CD14-positive monocyte (primary cell): ENCODE measurements at regions of chr4 and their contacts with region 1.

Region 1: GRCh38 chr4:7649741-7650531 is 215.2 kb upstream of the PSAPL1 start:
- DNase-seq: peak; percentile 96 to 97 (median 96)
- H3K4me3 ChIP-seq: peak overlapping the region in 1 of 3 experiments; percentile 54
- H3K4me3 Mint-ChIP-seq: peak overlapping the region; percentile 64 to 72
- H3K27ac ChIP-seq: peak overlapping the region; percentile 84 to 92
- H3K27ac Mint-ChIP-seq: peak overlapping the region; percentile 96 to 100 (median 99)
- H3K4me1 ChIP-seq: peaks cover 96 to 99% of the 10 kb centered on the region in 2 donors
- H3K4me1 Mint-ChIP-seq: peaks cover 96% of the 10 kb centered on the region
- H3K27me3 ChIP-seq: no peaks in the 10 kb centered on the region
- H3K27me3 Mint-ChIP-seq: peaks cover 6 to 42% (median 20%) of the 10 kb centered on the region in 3 donors
- CTCF ChIP-seq: no peak

Region 2: DNA sequence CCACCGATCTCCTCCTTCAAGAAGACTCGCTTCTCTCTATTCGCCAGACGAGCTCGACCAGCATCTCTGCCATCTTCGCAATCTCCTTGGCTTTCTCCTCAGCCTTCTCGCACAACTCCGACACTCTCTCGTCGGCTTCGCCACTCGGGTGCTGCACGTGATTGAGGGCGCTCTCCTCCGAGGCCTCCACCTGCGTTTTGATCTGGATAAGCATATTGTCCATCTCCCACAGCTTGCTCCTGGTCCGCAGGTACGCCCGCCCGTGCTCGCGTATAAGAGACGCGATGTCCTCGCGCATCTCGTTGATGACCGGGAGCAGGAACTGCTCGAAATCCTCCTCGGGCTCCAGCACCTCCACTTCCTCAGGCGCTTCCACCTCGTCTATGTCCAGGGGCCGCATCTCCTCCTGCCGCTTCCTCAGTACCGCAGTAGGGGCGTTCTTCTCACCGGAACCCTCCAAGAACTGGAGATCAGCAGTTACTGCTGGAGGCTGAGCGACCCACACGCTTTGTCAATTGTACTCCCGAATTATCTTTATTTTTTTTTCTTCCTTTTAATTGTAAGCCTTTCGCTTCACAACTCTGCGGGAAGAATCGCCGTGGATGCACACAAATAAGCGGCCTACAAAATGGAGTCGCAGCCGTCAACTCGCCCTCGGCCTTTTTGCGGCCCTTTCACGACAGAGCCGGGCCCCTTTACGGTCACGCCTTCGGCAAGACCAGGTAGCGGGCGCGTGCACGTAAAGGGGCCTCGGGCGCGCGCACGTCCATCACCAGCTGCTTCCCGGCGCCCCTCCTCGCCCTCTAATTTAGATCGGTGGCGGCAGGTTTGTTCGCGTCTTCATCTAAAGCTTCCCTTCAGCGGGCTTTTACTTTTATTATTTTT is 940.5 kb before region 1 on chr4 and contains the start of gene MRFAP1L1:
- intact Hi-C with region 1: loop called in 1 of 2 experiments (anchors 10 kb)
- DNase-seq: peak; percentile 93 to 95 (median 95)
- H3K4me3 ChIP-seq: peak within 1 kb of the TSS; percentile 75 to 85 (median 82)
- H3K4me3 Mint-ChIP-seq: peak within 1 kb of the TSS; percentile 99 to 100
- H3K27ac ChIP-seq: peak within 1 kb of the TSS; percentile 89 to 91
- H3K27ac Mint-ChIP-seq: peak within 1 kb of the TSS; percentile 96 to 99 (median 98)
- H3K4me1 ChIP-seq: peaks cover 36 to 41% of the 10 kb centered on the region in 2 donors
- H3K4me1 Mint-ChIP-seq: peaks cover 48% of the 10 kb centered on the region
- H3K27me3 ChIP-seq: no peaks in the 10 kb centered on the region
- H3K27me3 Mint-ChIP-seq: peaks cover 0 to 4% (median 2%) of the 10 kb centered on the region in 3 donors
- CTCF ChIP-seq: no peak
- polyA plus RNA-seq, gene MRFAP1L1: 7.6 to 19.1 (median 13.8) TPM

Region 3: GRCh38 chr4:7539659-7540058 is 110.3 kb before region 1 on chr4:
- intact Hi-C with region 1: loop called in 1 of 2 experiments (anchors 10 kb)
- DNase-seq: peak; percentile 48 to 71 (median 55)
- H3K4me3 ChIP-seq: peak overlapping the region in 1 of 3 experiments; percentile 23
- H3K4me3 Mint-ChIP-seq: no peak overlapping the region
- H3K27ac ChIP-seq: no peak overlapping the region
- H3K27ac Mint-ChIP-seq: peak overlapping the region in 2 of 7 donors; percentile 66 to 83
- H3K4me1 ChIP-seq: peaks cover 4 to 13% of the 10 kb centered on the region in 2 donors
- H3K4me1 Mint-ChIP-seq: peaks cover 2% of the 10 kb centered on the region
- H3K27me3 ChIP-seq: no peaks in the 10 kb centered on the region
- H3K27me3 Mint-ChIP-seq: peaks cover 0 to 1% (median 1%) of the 10 kb centered on the region in 3 donors
- CTCF ChIP-seq: no peak

Region 4: DNA sequence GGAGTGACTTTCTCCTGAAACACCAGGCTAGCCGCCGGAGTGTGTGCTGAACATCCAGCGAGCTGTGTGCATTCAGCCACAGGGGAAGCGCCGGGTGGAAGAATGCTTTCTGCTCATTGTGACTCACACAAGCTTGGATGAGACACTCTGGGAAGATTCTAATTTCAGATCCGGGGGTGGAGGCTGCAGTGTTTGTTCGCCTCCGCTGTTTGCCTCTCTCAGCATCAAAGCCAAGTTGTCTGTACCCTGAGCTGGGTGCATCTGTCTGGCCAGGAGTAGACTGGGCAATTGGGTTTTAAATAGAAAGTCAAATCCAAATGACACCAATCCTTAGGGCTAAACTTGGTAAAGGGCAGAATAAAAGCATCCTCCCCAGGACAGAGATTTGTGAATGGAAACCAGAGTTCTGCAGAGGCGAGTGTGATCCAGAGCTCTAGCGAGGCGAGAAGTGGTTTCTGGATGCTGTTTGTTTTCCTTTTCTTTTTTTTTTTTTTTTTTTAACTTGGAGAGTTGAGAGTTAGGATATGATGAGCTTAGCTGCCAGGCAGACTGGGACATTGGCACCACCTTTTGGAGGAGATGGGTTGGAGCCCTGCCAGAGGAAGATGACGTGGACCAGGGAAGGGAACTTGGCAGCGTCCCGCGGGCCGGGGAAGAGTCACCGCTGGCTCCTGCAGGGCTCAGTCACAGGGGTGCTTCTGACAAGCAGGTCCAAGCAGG is 19.2 kb before region 1 on chr4:
- intact Hi-C with region 1: loop called in 1 of 2 experiments (anchors 2 kb)
- DNase-seq: peak in 1 of 3 donors; percentile 44
- H3K4me3 ChIP-seq: no peak overlapping the region
- H3K4me3 Mint-ChIP-seq: peak overlapping the region in 1 of 2 donors; percentile 11
- H3K27ac ChIP-seq: no peak overlapping the region
- H3K27ac Mint-ChIP-seq: peak overlapping the region in 1 of 7 donors; percentile 13
- H3K4me1 ChIP-seq: peaks cover 17 to 21% of the 10 kb centered on the region in 2 donors
- H3K4me1 Mint-ChIP-seq: peaks cover 35% of the 10 kb centered on the region
- H3K27me3 ChIP-seq: peaks cover 0 to 2% of the 10 kb centered on the region in 2 donors
- H3K27me3 Mint-ChIP-seq: peaks cover 13 to 32% (median 23%) of the 10 kb centered on the region in 3 donors
- CTCF ChIP-seq: no peak

Region 5: GRCh38 chr4:7638984-7639789 is 10.7 kb before region 1 on chr4:
- intact Hi-C with region 1: loop called (anchors 1 kb)
- DNase-seq: peak; percentile 92 to 94 (median 92)
- H3K4me3 ChIP-seq: peak overlapping the region in 2 of 3 experiments; percentile 19 to 73
- H3K4me3 Mint-ChIP-seq: peak overlapping the region in 1 of 2 donors; percentile 83
- H3K27ac ChIP-seq: peak overlapping the region; percentile 86 to 92
- H3K27ac Mint-ChIP-seq: peak overlapping the region in 2 of 7 donors; percentile 97
- H3K4me1 ChIP-seq: peaks cover 67 to 76% of the 10 kb centered on the region in 2 donors
- H3K4me1 Mint-ChIP-seq: peaks cover 61% of the 10 kb centered on the region
- H3K27me3 ChIP-seq: no peaks in the 10 kb centered on the region
- H3K27me3 Mint-ChIP-seq: peaks cover 0 to 9% (median 3%) of the 10 kb centered on the region in 3 donors
- CTCF ChIP-seq: no peak

Region 6: GRCh38 chr4:7699031-7699430 is 49.1 kb after region 1 on chr4:
- intact Hi-C with region 1: no loop called
- DNase-seq: no peak
- H3K4me3 ChIP-seq: no peak overlapping the region
- H3K4me3 Mint-ChIP-seq: no peak overlapping the region
- H3K27ac ChIP-seq: no peak overlapping the region
- H3K27ac Mint-ChIP-seq: no peak overlapping the region
- H3K4me1 ChIP-seq: peaks cover 4 to 5% of the 10 kb centered on the region in 2 donors
- H3K4me1 Mint-ChIP-seq: peaks cover 11% of the 10 kb centered on the region
- H3K27me3 ChIP-seq: no peaks in the 10 kb centered on the region
- H3K27me3 Mint-ChIP-seq: peaks cover 17 to 27% (median 22%) of the 10 kb centered on the region in 3 donors
- CTCF ChIP-seq: no peak